Calu3 (cell line): ENCODE measurements at regions of chr17 and their contacts with region 1.

Region 1: GRCh38 chr17:37813751-37814150 is 68.9 kb upstream of the HNF1B start:
- DNase-seq: no peak
- H3K4me3 Mint-ChIP-seq: no peak overlapping the region
- H3K27ac Mint-ChIP-seq: no peak overlapping the region
- H3K4me1 Mint-ChIP-seq: peaks cover 15% of the 10 kb centered on the region
- H3K27me3 Mint-ChIP-seq: peaks cover 16% of the 10 kb centered on the region
- CTCF ChIP-seq: no peak

Region 2: GRCh38 chr17:37609170-37610040 is 204.3 kb before region 1 on chr17 and contains the start of gene SYNRG:
- CTCF ChIA-PET with region 1: interaction called, 15 read pairs
- intact Hi-C with region 1: no loop called
- DNase-seq: peak; percentile 100
- H3K4me3 Mint-ChIP-seq: peak within 1 kb of the TSS; percentile 97
- H3K27ac Mint-ChIP-seq: peak within 1 kb of the TSS; percentile 94
- H3K4me1 Mint-ChIP-seq: peaks cover 34% of the 10 kb centered on the region
- H3K27me3 Mint-ChIP-seq: no peaks in the 10 kb centered on the region
- CTCF ChIP-seq: peak; percentile 52
- total RNA-seq, gene SYNRG: 127 and 130 TPM in 2 replicates

Region 3: DNA sequence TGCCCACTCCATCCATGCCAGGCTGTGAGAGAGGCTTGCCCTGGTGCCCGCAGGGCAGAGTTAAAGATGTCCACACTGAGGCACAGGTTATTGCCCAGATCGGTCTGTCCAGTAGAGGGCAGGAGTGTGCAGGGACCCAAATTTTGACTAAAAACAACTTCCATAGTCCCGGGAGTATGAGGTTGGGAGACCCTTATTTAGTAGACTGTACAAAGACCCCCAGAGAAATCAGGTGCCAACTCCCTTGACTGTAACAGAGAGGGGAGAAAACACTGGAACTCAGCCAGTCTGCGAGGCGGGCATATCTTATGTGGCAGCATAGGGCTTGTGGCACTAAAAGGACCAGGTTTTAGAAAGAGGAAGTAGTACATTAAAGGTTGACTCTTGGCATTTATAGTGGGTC is 112.3 kb before region 1 on chr17:
- CTCF ChIA-PET with region 1: interaction called, 29 read pairs
- intact Hi-C with region 1: loop called (anchors 1 kb)
- DNase-seq: peak; percentile 93
- H3K4me3 Mint-ChIP-seq: peak overlapping the region; percentile 2
- H3K27ac Mint-ChIP-seq: peak overlapping the region; percentile 52
- H3K4me1 Mint-ChIP-seq: peaks cover 95% of the 10 kb centered on the region
- H3K27me3 Mint-ChIP-seq: no peaks in the 10 kb centered on the region
- CTCF ChIP-seq: peak; percentile 99

Region 4: GRCh38 chr17:37744961-37745800 is 68.6 kb before region 1 on chr17 and contains the start of gene HNF1B:
- CTCF ChIA-PET with region 1: interaction called, 75 read pairs
- intact Hi-C with region 1: loop called (anchors 2 kb)
- DNase-seq: peak; percentile 97
- H3K4me3 Mint-ChIP-seq: peak within 1 kb of the TSS; percentile 100
- H3K27ac Mint-ChIP-seq: peak within 1 kb of the TSS; percentile 99
- H3K4me1 Mint-ChIP-seq: peaks cover 39% of the 10 kb centered on the region
- H3K27me3 Mint-ChIP-seq: no peaks in the 10 kb centered on the region
- CTCF ChIP-seq: peak; percentile 10
- total RNA-seq, gene HNF1B: 127 and 130 TPM in 2 replicates

Region 5: GRCh38 chr17:37824534-37825485 is 11.1 kb after region 1 on chr17:
- CTCF ChIA-PET with region 1: interaction called, 25 read pairs
- intact Hi-C with region 1: no loop called
- DNase-seq: peak; percentile 76
- H3K4me3 Mint-ChIP-seq: no peak overlapping the region
- H3K27ac Mint-ChIP-seq: no peak overlapping the region
- H3K4me1 Mint-ChIP-seq: peaks cover 25% of the 10 kb centered on the region
- H3K27me3 Mint-ChIP-seq: peaks cover 14% of the 10 kb centered on the region
- CTCF ChIP-seq: no peak